Activated CD4-positive, alpha-beta T cell treated with anti-CD3 and anti-CD28 coated beads for 36 hours (primary cell): ENCODE measurements at regions of chr14 and their contacts with region 1.

Region 1: DNA sequence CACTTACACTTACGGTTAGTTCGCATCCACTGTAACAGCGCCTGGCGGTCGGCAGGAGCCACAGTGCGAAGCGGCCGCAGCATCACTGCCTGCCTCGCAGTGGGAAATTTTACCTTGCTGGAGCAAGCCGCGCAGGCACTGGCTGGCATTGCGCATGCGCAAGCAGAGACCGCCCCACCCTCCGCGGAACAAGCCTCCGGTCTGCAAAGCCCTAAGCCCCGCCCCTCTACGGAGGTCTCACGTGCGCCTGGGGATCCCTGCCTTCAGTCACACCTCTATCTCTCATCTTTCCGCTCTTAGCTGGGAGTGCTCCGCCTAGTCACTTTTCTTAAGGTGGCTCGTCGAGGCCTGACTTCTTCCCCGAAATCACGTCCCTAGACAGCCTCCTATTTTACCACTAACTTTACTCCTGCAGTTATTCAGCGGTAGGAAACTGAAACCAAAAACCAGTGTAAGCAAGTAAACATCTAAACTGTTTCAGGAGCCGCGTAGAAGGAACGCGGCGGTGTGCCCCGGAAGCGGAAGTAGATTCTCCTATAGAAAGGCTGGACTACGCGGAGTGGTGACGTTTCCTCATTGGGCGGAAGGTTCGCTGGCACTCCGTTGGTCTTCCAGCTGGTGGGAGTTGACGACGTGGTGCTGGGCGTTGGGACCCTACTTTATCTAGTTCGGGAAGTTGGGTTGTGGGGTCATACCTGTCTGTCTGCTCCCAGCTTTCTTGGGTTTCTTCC is at the start of gene SRP54:
- DNase-seq: peak; percentile 100
- ATAC-seq: peak; percentile 91
- H3K4me3 Mint-ChIP-seq: no peak within 1 kb of the TSS
- H3K27ac Mint-ChIP-seq: no peak within 1 kb of the TSS
- H3K4me1 Mint-ChIP-seq: peaks cover 16% of the 10 kb centered on the region
- H3K27me3 Mint-ChIP-seq: no peaks in the 10 kb centered on the region
- total RNA-seq, gene SRP54: 81.1 to 88.4 TPM

Region 2: DNA sequence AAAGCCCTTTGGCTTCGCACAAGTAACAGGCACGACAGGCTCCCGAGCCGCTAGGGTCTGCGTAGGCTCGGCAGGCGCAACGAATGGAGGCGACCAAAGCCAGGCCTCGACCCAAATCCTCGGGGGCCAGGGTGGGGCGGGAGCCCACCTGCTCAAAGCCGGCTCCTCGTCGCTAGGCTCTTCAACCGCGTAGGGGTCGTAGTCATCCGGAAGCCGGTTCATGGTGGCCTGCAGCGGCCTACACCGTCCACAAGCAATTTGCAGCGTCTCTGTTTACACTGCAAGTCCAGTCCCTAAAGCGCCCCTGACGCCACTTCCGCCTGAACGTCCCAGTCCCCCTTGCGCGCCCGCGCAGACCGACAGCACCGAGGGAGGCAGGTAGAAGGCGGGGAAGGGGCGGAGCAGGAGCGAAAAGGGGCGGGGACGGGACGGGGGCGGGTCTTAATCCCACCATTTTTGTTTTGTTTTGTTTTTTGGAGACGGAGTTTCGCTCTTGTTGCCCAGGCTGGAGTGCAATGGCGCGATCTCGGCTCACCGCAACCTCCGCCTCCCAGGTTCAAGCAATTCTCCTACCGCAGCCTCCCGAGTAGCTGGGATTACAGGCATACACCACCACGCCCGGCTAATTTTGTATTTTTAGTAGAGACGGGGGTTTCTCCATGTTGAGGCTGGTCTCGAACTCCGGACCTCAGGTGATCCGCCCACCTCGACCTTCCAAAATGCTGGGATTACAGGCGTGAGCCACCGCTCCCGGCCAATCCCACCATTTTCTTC is 443.0 kb before region 1 on chr14 and contains the start of gene EAPP:
- CTCF ChIA-PET with region 1: no interaction called
- POLR2A ChIA-PET with region 1: no interaction called
- intact Hi-C with region 1: loop called in 1 of 2 experiments (anchors 5 kb)
- DNase-seq: peak; percentile 98
- ATAC-seq: peak; percentile 99
- H3K4me3 Mint-ChIP-seq: peak within 1 kb of the TSS; percentile 94
- H3K27ac Mint-ChIP-seq: peak within 1 kb of the TSS; percentile 95
- H3K4me1 Mint-ChIP-seq: peaks cover 33% of the 10 kb centered on the region
- H3K27me3 Mint-ChIP-seq: no peaks in the 10 kb centered on the region
- total RNA-seq, gene EAPP: 41.6 to 49.2 TPM

Region 3: GRCh38 chr14:34843011-34843554 is 139.5 kb before region 1 on chr14:
- CTCF ChIA-PET with region 1: no interaction called
- POLR2A ChIA-PET with region 1: no interaction called
- intact Hi-C with region 1: loop called (anchors 1 kb)
- DNase-seq: peak; percentile 54
- ATAC-seq: peak; percentile 98
- H3K4me3 Mint-ChIP-seq: no peak overlapping the region
- H3K27ac Mint-ChIP-seq: peak overlapping the region; percentile 74
- H3K4me1 Mint-ChIP-seq: peaks cover 25% of the 10 kb centered on the region
- H3K27me3 Mint-ChIP-seq: no peaks in the 10 kb centered on the region

Region 4: GRCh38 chr14:34966413-34966812 is 16.2 kb before region 1 on chr14:
- CTCF ChIA-PET with region 1: interaction called, 6 read pairs
- POLR2A ChIA-PET with region 1: interaction called, 6 read pairs
- intact Hi-C with region 1: loop called in 1 of 2 experiments (anchors 2 kb)
- DNase-seq: peak; percentile 11
- ATAC-seq: peak; percentile 97
- H3K4me3 Mint-ChIP-seq: no peak overlapping the region
- H3K27ac Mint-ChIP-seq: no peak overlapping the region
- H3K4me1 Mint-ChIP-seq: peaks cover 25% of the 10 kb centered on the region
- H3K27me3 Mint-ChIP-seq: no peaks in the 10 kb centered on the region

Region 5: DNA sequence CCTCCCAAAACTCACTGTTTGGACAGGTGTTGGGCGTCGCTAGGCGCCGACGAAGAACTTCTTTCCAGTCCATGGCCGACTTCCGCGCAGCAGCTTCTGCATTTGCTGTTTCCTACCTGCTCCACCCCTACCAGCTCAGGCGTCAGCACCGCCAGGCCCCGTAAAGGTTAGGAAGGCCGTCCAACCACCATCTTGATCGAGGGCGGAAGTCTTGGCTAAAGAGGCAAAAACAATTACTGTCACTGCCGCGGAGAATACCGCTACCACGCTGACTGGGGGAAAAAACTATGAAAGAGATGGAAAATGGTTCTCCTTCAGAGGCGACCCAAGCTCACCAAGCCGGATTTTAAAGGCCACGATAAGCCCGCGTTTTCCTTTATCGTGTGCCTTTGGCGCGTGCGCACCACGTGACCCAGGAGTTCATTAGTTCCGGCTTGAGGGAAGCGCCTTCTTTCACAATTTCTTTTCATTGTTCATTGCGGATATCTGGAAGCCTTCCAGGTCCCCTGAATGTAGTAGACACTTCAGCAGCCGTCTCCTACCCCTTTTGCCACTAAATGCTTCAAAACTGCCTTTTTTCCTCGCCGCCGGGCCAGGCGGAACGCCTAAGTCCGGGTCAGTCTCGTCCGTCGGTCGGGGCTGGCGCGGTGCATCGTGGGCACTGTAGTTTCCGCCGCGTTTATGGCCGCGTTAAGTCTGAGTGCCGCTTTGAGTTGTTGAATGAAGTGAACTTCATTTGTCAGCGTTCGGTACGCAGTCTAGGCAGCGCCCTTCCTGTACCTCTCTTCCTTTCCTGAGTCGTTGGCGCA is 139.5 kb after region 1 on chr14 and contains the starts of genes PPP2R3C and PRORP:
- CTCF ChIA-PET with region 1: interaction called, 5 read pairs
- POLR2A ChIA-PET with region 1: interaction called, 3 read pairs
- intact Hi-C with region 1: loop called (anchors 1 kb)
- DNase-seq: peak; percentile 93
- ATAC-seq: peak; percentile 87
- H3K4me3 Mint-ChIP-seq: peak within 1 kb of the TSS; percentile 87
- H3K27ac Mint-ChIP-seq: peak within 1 kb of the TSS; percentile 99
- H3K4me1 Mint-ChIP-seq: peaks cover 64% of the 10 kb centered on the region
- H3K27me3 Mint-ChIP-seq: no peaks in the 10 kb centered on the region
- total RNA-seq, gene PPP2R3C: 43.8 to 53.5 TPM
- total RNA-seq, gene PRORP: 37.3 to 51.1 TPM

Region 6: DNA sequence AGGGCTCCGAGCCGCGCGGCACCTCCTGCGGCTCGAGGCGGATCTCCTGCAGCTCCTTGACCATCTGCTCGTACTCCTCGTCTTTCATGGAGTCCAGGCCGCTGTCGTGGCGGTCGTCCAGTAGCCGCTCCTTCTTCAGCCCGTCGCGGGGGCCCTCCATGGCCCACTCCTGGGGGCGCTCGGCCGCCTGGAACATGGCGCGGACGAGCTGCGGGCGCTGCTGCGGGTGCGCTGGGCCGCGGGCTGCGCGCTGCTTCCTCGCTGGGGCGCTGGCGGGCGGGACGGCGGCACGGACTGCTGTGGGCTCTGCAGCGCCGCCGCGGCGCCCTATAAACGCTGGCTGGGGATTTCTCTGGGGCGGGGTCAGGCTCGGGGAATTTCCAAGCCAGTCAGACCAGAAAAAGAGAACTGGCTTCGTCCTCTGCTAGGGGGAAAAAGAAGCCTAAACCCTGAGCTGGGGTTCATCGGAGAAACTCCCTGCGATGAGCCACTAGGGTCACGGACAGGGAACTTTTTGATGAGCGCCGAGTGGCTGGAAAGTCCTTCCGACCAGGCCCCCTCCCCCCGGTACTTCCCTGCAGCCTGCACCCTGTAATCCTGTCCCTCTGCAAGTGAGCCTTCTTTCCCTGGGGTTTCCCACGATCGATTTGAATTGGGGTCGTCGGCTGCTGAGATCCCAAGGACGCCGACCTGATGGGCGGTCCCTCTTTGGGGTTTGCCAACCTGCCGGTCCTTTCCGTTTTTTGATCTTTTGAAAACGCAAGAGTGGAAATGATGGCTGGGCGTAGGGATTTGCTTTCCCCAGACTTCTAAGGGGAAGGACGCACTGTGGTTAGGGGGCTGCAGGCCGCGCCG is 422.1 kb after region 1 on chr14 and contains the start of gene NFKBIA:
- CTCF ChIA-PET with region 1: interaction called, 4 read pairs
- POLR2A ChIA-PET with region 1: interaction called, 13 read pairs
- intact Hi-C with region 1: loop called in 1 of 2 experiments (anchors 1 kb)
- DNase-seq: peak; percentile 98
- ATAC-seq: peak; percentile 72
- H3K4me3 Mint-ChIP-seq: peak within 1 kb of the TSS; percentile 99
- H3K27ac Mint-ChIP-seq: peak within 1 kb of the TSS; percentile 98
- H3K4me1 Mint-ChIP-seq: peaks cover 34% of the 10 kb centered on the region
- H3K27me3 Mint-ChIP-seq: no peaks in the 10 kb centered on the region
- total RNA-seq, gene NFKBIA: 264 to 298 TPM